ENCODE measurements at regions of chr10 and their contacts with region 1.

Region 1: DNA sequence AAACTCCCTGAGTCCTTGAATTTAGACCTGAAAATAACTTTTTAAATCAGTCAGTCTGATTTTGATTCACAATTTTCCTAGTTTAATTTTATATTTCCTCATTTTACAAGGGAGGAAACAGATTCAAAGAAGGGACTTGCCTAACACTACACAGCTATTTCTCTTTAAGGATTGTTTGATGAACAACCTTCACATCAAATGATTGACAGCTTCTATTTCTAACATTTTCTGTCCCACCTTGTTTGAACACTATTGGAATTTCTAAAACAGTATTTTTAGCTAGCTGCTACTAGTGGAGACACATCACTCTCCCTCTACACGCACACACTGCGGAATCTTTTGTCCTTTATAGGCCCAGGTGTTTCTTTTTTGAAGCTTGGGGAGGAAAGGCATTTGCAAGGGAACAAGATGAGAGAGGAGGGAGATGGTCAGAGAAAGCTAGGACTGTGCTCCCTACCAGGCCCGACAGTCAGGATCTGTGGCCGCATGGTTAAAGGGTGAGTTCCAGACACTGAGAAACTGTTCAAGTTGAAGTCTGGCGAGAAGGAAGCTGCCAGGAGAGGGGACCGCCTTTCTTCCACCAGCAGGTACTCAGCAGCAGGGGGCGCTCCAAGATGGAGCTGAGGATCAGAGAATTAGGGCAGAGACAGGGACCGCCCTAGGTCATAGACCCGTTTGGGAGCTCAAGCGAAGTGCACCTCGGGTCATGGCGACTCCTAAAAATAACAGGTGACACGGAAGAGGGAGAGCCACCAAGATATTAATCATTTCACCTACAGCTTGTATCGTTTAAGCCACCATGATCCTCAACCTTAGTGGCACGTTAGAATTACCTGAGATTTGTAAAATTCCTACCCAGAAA is 49.7 kb downstream of the DNAJC12 start:
- DNase-seq: peak; percentile 94
- H3K4me3 Mint-ChIP-seq: peak overlapping the region; percentile 41
- H3K27ac Mint-ChIP-seq: peak overlapping the region; percentile 77
- H3K4me1 Mint-ChIP-seq: peaks cover 42% of the 10 kb centered on the region
- H3K27me3 Mint-ChIP-seq: no peaks in the 10 kb centered on the region

Region 2: DNA sequence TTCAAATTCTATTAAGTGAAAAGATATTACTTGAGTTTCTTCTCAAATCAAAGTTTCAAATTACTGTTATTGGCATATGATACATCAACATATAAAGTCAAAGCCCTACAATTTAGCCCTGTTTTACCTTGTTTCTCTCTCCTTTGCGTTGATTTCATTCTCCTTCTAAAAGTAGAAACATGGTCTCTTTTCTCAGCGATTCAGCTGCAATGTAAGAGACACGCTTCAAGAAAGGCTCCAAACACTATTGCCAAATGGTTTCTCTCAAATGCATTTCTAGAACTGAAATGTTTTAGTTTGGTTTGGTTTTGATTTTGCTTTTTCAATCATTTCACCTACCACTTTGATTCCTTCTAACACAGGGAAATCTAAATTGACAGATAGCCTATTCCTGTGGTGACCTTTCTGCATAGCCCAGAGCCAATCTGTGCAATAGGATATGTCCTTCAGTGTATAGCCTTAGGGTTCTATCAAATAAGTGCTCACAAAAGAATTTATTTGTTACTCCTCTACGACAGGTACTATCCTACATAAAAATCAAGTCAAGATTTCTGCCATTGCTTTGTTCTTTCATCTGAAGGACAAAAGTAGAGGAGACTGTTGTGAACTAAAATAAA is 139.5 kb before region 1 on chr10:
- intact Hi-C with region 1: no loop called
- DNase-seq: no peak
- H3K4me3 Mint-ChIP-seq: no peak overlapping the region
- H3K27ac Mint-ChIP-seq: no peak overlapping the region
- H3K4me1 Mint-ChIP-seq: no peaks in the 10 kb centered on the region
- H3K27me3 Mint-ChIP-seq: peaks cover 7% of the 10 kb centered on the region

Region 3: GRCh38 chr10:67815571-67816059 is 27.4 kb after region 1 on chr10:
- intact Hi-C with region 1: loop called (anchors 1 kb)
- DNase-seq: no peak
- H3K4me3 Mint-ChIP-seq: peak overlapping the region; percentile 37
- H3K27ac Mint-ChIP-seq: peak overlapping the region; percentile 73
- H3K4me1 Mint-ChIP-seq: peaks cover 13% of the 10 kb centered on the region
- H3K27me3 Mint-ChIP-seq: no peaks in the 10 kb centered on the region

Region 4: GRCh38 chr10:67884313-67884841 is 96.1 kb after region 1 on chr10 and contains the start of gene SIRT1:
- intact Hi-C with region 1: loop called (anchors 2 kb)
- DNase-seq: peak; percentile 98
- H3K4me3 Mint-ChIP-seq: peak within 1 kb of the TSS; percentile 97
- H3K27ac Mint-ChIP-seq: peak within 1 kb of the TSS; percentile 90
- H3K4me1 Mint-ChIP-seq: peaks cover 23% of the 10 kb centered on the region
- H3K27me3 Mint-ChIP-seq: peaks cover 3% of the 10 kb centered on the region
- total RNA-seq, gene SIRT1: 27.1 and 27.8 TPM in 2 replicates

Region 5: DNA sequence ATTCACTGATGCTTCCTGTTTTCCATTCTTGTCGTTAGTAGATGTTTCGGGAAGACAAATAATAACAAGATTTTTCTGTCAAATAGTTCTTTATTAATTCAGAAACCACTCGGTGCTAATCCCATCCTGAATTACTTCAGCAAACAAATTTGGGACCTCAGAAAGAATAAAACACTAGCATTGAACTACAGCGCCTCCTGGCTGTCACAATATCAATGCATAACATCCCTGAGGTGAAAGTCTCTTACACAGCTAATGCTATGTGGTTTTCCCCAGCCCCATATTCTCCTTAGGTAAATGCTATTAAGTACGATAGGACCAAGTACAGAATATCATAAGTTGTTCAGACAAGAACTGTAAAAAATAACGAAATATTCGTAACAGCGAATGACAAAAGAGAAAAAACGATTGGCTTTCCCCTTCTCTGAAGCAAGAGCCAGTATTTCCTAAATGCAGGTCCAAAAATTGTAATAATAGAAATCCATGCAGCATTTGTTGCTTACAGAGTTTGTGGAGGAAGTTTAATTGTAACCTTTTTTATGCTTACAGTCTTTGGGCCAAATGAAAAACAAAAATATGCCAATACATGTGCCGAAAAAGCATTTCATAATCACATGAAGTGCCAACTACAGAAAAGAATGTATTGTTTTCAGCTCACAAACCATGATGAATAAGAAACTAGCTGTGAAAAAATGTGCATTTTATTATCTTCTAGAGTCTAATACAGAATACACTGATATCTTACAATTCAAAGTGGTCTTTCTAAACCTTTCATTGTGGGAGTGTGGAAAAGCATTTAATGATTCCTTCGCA is 368.3 kb after region 1 on chr10:
- intact Hi-C with region 1: loop called (anchors 1 kb)
- DNase-seq: peak; percentile 88
- H3K4me3 Mint-ChIP-seq: no peak overlapping the region
- H3K27ac Mint-ChIP-seq: no peak overlapping the region
- H3K4me1 Mint-ChIP-seq: peaks cover 3% of the 10 kb centered on the region
- H3K27me3 Mint-ChIP-seq: no peaks in the 10 kb centered on the region